ENCODE measurements at regions of chr20 and their contacts with region 1.

Region 1: DNA sequence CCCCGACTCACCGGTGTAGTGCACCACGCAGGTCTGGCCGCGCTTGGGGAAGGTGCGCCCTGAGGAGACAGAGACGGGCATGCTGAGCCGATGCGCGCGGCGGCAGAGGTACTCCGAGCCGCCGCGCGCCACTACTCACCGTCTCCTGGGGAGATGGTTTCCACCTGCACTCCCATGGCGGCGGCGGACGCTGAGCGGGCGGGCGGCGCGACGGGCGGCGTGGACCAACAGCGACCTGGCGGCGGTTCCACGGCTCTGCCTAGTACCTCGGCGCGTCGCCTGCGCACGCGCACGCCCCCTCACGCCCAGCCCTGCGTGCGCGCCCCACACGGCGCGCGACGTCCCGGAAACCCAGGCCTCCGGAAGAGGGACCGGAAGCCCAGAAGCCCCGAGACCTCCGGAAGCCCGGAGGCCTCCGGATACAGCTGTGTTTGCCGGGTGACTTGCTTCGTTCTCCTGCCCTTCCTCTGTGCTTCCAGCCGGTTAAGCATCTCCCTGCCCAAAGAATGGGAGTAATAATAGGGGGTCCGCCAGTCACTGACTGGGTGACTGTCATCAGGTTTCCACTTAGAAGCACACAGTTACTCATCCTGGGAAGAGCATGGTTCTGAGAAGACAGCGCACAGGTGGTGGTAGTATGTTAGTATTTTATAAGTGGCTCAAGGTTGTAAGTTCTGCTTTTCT is at the start of gene FKBP1A:
- DNase-seq: peak; percentile 94
- total RNA-seq, gene FKBP1A: 163 TPM

Region 2: GRCh38 chr20:1325173-1326030 is 67.6 kb before region 1 on chr20:
- intact Hi-C with region 1: loop called (anchors 1 kb)
- DNase-seq: peak; percentile 98

Region 3: DNA sequence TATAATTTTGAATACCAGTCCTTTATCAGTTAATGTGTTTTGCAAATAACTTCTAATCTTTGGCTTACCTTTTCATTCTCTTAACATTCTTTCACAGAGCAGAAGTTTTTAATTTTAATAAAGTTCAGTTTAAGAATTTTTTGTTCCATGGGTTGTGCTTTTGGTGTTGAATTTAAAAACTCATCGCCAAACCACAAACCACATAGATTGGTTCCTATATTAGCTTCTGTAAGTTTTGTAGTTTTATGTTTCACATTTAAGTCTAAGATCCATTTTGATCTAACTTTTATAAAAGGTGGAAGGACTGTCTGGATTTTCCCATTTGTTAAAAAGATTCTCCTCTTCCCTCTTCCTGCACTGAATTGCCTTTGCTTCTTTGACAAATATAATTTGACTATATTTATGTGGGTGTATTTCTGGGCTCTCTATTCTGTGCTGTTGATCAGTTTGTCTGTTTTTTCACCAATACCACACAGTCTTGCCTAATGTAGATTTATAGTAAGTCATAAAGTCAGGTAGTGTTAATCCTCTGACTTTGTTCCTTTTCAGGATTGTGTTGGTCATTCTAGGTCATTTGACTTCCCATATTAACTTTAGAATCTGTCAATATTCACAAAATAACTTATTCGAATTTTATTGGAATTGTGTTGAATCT is 46.5 kb before region 1 on chr20:
- intact Hi-C with region 1: no loop called
- DNase-seq: no peak

Region 4: GRCh38 chr20:1437235-1437904 is 44.4 kb after region 1 on chr20:
- intact Hi-C with region 1: no loop called
- DNase-seq: peak; percentile 89

Region 5: GRCh38 chr20:1466211-1467081 is 73.5 kb after region 1 on chr20 and contains the start of gene NSFL1C:
- intact Hi-C with region 1: loop called (anchors 5 kb)
- DNase-seq: peak; percentile 98
- total RNA-seq, gene NSFL1C: 64.0 TPM

Measured in cardiac septum (tissue), 1 donor.